CD8-positive, alpha-beta T cell (primary cell): ENCODE measurements at regions of chr22 and their contacts with region 1.

Region 1: DNA sequence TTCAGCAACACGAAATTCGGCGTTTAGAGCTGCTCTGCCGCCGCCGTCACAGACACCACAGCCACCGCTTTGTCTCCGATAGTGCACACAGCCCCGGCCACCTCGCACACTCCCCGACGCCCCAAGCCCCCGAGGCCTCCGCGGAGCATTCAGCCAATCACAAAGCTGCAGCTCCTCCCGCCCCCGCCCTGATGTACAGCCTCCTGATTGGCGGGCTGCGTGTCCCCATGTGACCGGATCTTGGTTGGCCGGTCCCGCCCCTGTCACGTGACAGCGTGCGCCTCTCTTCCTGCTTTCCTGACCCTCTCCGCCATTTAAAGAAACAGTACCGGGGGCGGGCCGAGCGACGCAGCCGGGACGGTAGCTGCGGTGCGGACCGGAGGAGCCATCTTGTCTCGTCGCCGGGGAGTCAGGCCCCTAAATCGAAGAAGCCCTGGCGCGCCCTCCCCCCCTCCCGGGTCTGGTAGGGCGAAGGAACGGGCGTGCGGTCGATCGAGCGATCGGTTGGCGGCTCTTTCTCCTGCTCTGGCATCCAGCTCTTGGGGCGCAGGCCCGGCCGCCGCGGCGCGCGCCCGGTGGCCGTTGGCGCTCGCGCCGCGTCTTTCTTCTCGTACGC is at the start of gene TUG1:
- DNase-seq: peak; percentile 94 to 99 (median 97)
- ATAC-seq: peak; percentile 93
- H3K4me3 ChIP-seq: peak within 1 kb of the TSS; percentile 69 to 81
- H3K4me3 Mint-ChIP-seq: peak within 1 kb of the TSS; percentile 97
- H3K27ac ChIP-seq: peak within 1 kb of the TSS; percentile 75 to 91
- H3K27ac Mint-ChIP-seq: peak within 1 kb of the TSS; percentile 98
- H3K4me1 ChIP-seq: peaks cover 21% of the 10 kb centered on the region
- H3K4me1 Mint-ChIP-seq: peaks cover 51% of the 10 kb centered on the region
- H3K27me3 ChIP-seq: no peaks in the 10 kb centered on the region
- H3K27me3 Mint-ChIP-seq: no peaks in the 10 kb centered on the region
- CTCF ChIP-seq: no peak
- total RNA-seq, gene TUG1: 74.9 to 79.0 TPM

Region 2: DNA sequence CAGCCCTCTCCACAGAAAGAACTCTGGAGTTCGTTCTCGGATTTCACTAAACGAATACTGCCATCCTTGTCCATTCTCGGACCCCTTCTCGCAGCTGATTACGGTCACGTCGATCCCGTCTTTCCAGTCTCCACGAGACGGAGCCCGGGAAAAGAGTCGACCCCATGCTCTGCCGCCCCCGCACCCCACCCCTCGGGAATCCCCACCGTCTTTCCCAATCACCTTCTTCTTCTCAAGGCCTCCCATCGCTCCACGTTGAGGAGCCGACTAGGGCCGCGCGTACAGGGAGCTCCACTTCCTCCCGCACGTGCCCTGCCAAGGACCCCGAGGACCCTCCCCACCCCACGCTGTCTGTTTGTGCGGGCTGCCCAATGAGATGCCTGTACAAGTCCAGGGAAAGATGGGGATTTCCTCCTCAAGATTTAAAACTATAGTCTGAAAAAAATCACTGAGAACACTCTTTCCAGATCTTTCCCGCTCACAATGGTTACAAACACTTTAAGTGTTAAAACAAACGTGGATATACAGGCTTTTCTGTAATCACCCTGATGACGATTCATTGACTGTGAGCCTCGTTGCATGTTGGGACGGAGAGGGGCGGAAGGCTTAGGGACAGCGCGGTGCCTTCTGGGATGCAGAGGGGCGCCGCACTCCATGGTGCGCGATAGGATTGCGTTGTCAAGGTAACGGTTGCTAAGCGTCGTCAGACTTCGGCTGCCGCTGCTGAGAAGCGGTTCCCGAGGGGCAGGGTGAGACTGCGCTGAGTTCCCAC is 377.3 kb before region 1 on chr22 and contains the start of gene PES1:
- CTCF ChIA-PET with region 1: no interaction called
- POLR2A ChIA-PET with region 1: interaction called, 3 read pairs
- intact Hi-C with region 1: loop called in 1 of 2 experiments (anchors 1 kb)
- DNase-seq: peak; percentile 90 to 99 (median 95)
- ATAC-seq: peak; percentile 96
- H3K4me3 ChIP-seq: peak within 1 kb of the TSS; percentile 79 to 80
- H3K4me3 Mint-ChIP-seq: no peak within 1 kb of the TSS
- H3K27ac ChIP-seq: peak within 1 kb of the TSS; percentile 89 to 97
- H3K27ac Mint-ChIP-seq: no peak within 1 kb of the TSS
- H3K4me1 ChIP-seq: peaks cover 15% of the 10 kb centered on the region
- H3K4me1 Mint-ChIP-seq: no peaks in the 10 kb centered on the region
- H3K27me3 ChIP-seq: no peaks in the 10 kb centered on the region
- H3K27me3 Mint-ChIP-seq: peaks cover 13% of the 10 kb centered on the region
- CTCF ChIP-seq: no peak
- total RNA-seq, gene PES1: 39.7 to 47.0 TPM

Region 3: GRCh38 chr22:30940685-30941362 is 28.2 kb before region 1 on chr22:
- CTCF ChIA-PET with region 1: interaction called, 8 read pairs
- POLR2A ChIA-PET with region 1: interaction called, 36 read pairs
- intact Hi-C with region 1: loop called (anchors 1 to 2 kb)
- DNase-seq: peak in 8 of 9 experiments; percentile 35 to 79 (median 48)
- ATAC-seq: peak; percentile 74
- H3K4me3 ChIP-seq: peak overlapping the region; percentile 38
- H3K4me3 Mint-ChIP-seq: peak overlapping the region; percentile 77
- H3K27ac ChIP-seq: peak overlapping the region; percentile 60 to 78
- H3K27ac Mint-ChIP-seq: peak overlapping the region; percentile 90
- H3K4me1 ChIP-seq: peaks cover 74% of the 10 kb centered on the region
- H3K4me1 Mint-ChIP-seq: peaks cover 87% of the 10 kb centered on the region
- H3K27me3 ChIP-seq: no peaks in the 10 kb centered on the region
- H3K27me3 Mint-ChIP-seq: no peaks in the 10 kb centered on the region
- CTCF ChIP-seq: no peak

Region 4: GRCh38 chr22:30979932-30980331 is 10.9 kb after region 1 on chr22:
- CTCF ChIA-PET with region 1: interaction called, 5 read pairs
- POLR2A ChIA-PET with region 1: interaction called, 24 read pairs
- intact Hi-C with region 1: no loop called
- DNase-seq: no peak
- ATAC-seq: no peak
- H3K4me3 ChIP-seq: no peak overlapping the region
- H3K4me3 Mint-ChIP-seq: no peak overlapping the region
- H3K27ac ChIP-seq: no peak overlapping the region
- H3K27ac Mint-ChIP-seq: no peak overlapping the region
- H3K4me1 ChIP-seq: no peaks in the 10 kb centered on the region
- H3K4me1 Mint-ChIP-seq: peaks cover 2% of the 10 kb centered on the region
- H3K27me3 ChIP-seq: no peaks in the 10 kb centered on the region
- H3K27me3 Mint-ChIP-seq: no peaks in the 10 kb centered on the region
- CTCF ChIP-seq: no peak

Region 5: GRCh38 chr22:31272522-31273446 is 303.8 kb after region 1 on chr22:
- CTCF ChIA-PET with region 1: no interaction called
- POLR2A ChIA-PET with region 1: interaction called, 3 read pairs
- intact Hi-C with region 1: loop called in 1 of 2 experiments (anchors 10 kb)
- DNase-seq: peak in 8 of 9 experiments; percentile 44 to 76 (median 64)
- ATAC-seq: peak; percentile 76
- H3K4me3 ChIP-seq: no peak overlapping the region
- H3K4me3 Mint-ChIP-seq: no peak overlapping the region
- H3K27ac ChIP-seq: no peak overlapping the region
- H3K27ac Mint-ChIP-seq: peak overlapping the region; percentile 91
- H3K4me1 ChIP-seq: peaks cover 61% of the 10 kb centered on the region
- H3K4me1 Mint-ChIP-seq: peaks cover 63% of the 10 kb centered on the region
- H3K27me3 ChIP-seq: no peaks in the 10 kb centered on the region
- H3K27me3 Mint-ChIP-seq: no peaks in the 10 kb centered on the region
- CTCF ChIP-seq: peak; percentile 63

Region 6: DNA sequence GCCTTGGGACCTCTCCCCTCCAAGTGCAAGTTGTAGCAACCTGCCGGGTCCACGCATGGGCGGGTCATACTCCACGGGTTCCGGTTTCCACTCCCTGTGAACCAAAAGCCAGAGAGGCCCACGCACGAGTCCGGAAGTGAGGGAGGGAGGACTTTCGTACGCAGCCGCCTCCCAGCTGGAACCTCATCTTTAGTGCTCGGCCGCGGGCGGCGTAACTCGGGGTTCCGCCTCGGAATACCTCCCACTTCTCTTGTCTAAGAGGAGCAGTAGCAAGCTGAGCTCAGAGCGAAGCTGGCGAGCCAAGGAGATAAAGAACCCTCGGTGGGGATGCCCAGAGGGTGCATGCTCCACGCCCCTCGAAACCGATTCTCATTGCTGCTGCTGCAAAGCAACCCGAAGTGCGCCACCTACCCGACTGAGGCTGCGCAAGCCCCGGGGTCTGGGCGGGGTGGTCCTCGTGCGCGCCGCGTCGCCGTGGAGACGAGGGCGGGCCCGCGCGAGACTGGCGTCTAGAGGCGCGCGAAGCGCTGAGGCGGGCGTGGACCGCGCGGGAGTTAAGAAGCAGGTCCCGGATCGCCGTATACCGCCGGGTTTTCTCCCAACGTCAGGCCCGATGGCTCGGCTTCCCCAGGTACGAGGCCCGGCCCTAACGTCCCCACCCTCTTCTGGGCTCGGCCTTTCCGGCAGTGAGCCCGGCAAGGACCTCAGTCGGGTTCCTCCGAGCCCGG is 527.1 kb after region 1 on chr22 and contains the start of gene SFI1:
- CTCF ChIA-PET with region 1: no interaction called
- POLR2A ChIA-PET with region 1: no interaction called
- intact Hi-C with region 1: loop called in 1 of 2 experiments (anchors 2 kb)
- DNase-seq: peak; percentile 93 to 98 (median 96)
- ATAC-seq: peak; percentile 83
- H3K4me3 ChIP-seq: peak within 1 kb of the TSS; percentile 83 to 91
- H3K4me3 Mint-ChIP-seq: peak within 1 kb of the TSS; percentile 95
- H3K27ac ChIP-seq: peak within 1 kb of the TSS; percentile 87 to 90
- H3K27ac Mint-ChIP-seq: peak within 1 kb of the TSS; percentile 99
- H3K4me1 ChIP-seq: peaks cover 27% of the 10 kb centered on the region
- H3K4me1 Mint-ChIP-seq: peaks cover 45% of the 10 kb centered on the region
- H3K27me3 ChIP-seq: no peaks in the 10 kb centered on the region
- H3K27me3 Mint-ChIP-seq: no peaks in the 10 kb centered on the region
- CTCF ChIP-seq: no peak
- total RNA-seq, gene SFI1: 217 to 235 TPM